ENCODE measurements at regions of chr3 and their contacts with region 1.

Region 1: GRCh38 chr3:54427941-54428871 is 305.9 kb downstream of the CACNA2D3 start:
- DNase-seq: peak; percentile 15 to 63
- ATAC-seq: peak; percentile 57 to 87 (median 64)
- H3K4me3 ChIP-seq: no peak overlapping the region
- H3K27ac ChIP-seq: no peak overlapping the region
- H3K4me1 ChIP-seq: peaks cover 5% of the 10 kb centered on the region
- H3K27me3 ChIP-seq: no peaks in the 10 kb centered on the region
- CTCF ChIP-seq: peak; percentile 79

Region 2: GRCh38 chr3:55180936-55181535 is 752.8 kb after region 1 on chr3:
- intact Hi-C with region 1: loop called in 1 of 2 experiments (anchors 5 kb)
- DNase-seq: no peak
- ATAC-seq: peak in 1 of 4 donors; percentile 53
- H3K4me3 ChIP-seq: no peak overlapping the region
- H3K27ac ChIP-seq: no peak overlapping the region
- H3K4me1 ChIP-seq: no peaks in the 10 kb centered on the region
- H3K27me3 ChIP-seq: no peaks in the 10 kb centered on the region
- CTCF ChIP-seq: peak; percentile 79

Region 3: GRCh38 chr3:56251343-56251945 is 1823.2 kb after region 1 on chr3:
- intact Hi-C with region 1: loop called in 1 of 2 experiments (anchors 10 kb)
- DNase-seq: no peak
- ATAC-seq: peak in 2 of 4 donors; percentile 44 to 60
- H3K4me3 ChIP-seq: no peak overlapping the region
- H3K27ac ChIP-seq: no peak overlapping the region
- H3K4me1 ChIP-seq: no peaks in the 10 kb centered on the region
- H3K27me3 ChIP-seq: no peaks in the 10 kb centered on the region
- CTCF ChIP-seq: peak; percentile 81